ENCODE measurements at regions of chr18 and their contacts with region 1.

Region 1: GRCh38 chr18:12890506-12890905 is 6.5 kb upstream of the PTPN2 start:
- DNase-seq: no peak
- CTCF ChIP-seq: no peak

Region 2: GRCh38 chr18:12750076-12750714 is 140.3 kb before region 1 on chr18:
- in situ Hi-C with region 1: loop called (anchors 10 kb)
- DNase-seq: peak; percentile 22
- CTCF ChIP-seq: no peak

Measured in GM13976 (cell line).